Activated CD4-positive, alpha-beta memory T cell treated with anti-CD3 and anti-CD28 coated beads for 36 hours (primary cell): ENCODE measurements at regions of chr5 and their contacts with region 1.

Region 1: GRCh38 chr5:131382407-131383395 is 118.8 kb downstream of the CDC42SE2 start:
- DNase-seq: peak; percentile 58
- H3K4me3 Mint-ChIP-seq: peak overlapping the region; percentile 39
- H3K27ac Mint-ChIP-seq: peak overlapping the region; percentile 94
- H3K4me1 Mint-ChIP-seq: peaks cover 91% of the 10 kb centered on the region
- H3K27me3 Mint-ChIP-seq: no peaks in the 10 kb centered on the region

Region 2: DNA sequence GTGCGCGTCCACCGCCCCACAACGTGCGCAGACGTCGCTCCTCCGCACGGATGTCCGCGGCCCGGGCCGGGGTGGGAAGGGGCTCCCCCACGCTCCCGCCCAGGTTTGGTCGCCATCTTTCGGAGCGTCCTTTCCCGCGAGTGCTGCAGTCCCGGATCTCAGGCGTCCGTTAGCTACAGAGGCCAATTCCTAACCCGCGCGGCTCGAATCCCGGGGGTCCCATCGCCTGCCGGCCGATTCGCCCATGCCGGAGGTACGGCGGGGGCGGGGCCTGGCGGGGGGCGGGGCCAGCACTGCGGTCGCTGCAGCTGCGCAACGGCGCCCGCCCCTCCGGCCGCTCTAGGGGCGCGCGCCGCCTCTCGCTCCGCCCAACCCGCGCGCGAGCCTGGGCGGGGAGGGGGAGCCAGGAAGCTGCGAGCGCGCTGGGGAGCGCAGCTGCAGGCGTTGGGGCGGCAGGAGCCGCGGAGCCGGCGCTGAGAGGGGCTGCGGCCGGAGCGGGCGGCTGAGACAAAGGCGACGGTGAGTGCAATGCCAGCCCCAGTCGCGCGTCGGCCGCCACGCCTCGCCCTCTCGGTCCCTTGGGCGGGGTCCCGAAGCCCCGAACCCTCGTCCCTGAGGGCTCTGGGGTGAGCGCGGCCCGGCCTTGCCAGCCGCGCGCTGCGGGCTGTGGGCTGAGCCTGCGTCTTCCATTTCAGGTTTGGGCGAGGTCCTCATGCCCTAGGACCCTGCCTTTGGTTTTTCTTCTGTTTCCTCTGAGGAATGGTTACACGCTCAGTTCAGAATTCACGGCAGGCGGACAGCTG is 118.9 kb before region 1 on chr5 and contains the start of gene CDC42SE2:
- CTCF ChIA-PET with region 1: interaction called, 43 read pairs
- POLR2A ChIA-PET with region 1: interaction called, 65 read pairs
- intact Hi-C with region 1: loop called (anchors 1 kb)
- DNase-seq: peak; percentile 88
- H3K4me3 Mint-ChIP-seq: peak within 1 kb of the TSS; percentile 89
- H3K27ac Mint-ChIP-seq: peak within 1 kb of the TSS; percentile 95
- H3K4me1 Mint-ChIP-seq: peaks cover 48% of the 10 kb centered on the region
- H3K27me3 Mint-ChIP-seq: no peaks in the 10 kb centered on the region
- total RNA-seq, gene CDC42SE2: 103 to 104 TPM

Region 3: DNA sequence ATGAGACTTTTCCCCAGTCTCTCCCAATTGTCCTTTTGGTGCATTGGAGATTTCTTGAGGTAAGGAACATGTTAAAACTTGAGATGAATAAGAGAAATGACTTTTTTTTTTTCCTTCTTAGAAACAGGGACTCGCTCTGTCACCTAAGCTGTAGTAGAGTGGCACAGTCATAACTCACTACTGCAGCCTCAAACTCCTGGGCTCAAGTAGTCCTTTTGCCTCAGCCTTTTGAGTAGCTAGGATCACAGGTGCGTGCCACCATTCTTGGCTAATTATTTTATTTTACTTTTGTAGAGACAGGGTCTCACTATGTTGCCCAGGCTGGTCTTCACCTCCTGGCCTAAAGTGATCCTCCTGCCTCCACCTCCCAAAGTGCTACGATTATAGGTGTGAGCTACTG is 93.0 kb before region 1 on chr5:
- CTCF ChIA-PET with region 1: interaction called, 10 read pairs
- POLR2A ChIA-PET with region 1: interaction called, 4 read pairs
- intact Hi-C with region 1: loop called (anchors 1 kb)
- DNase-seq: peak; percentile 62
- H3K4me3 Mint-ChIP-seq: peak overlapping the region; percentile 75
- H3K27ac Mint-ChIP-seq: peak overlapping the region; percentile 97
- H3K4me1 Mint-ChIP-seq: peaks cover 69% of the 10 kb centered on the region
- H3K27me3 Mint-ChIP-seq: no peaks in the 10 kb centered on the region

Region 4: DNA sequence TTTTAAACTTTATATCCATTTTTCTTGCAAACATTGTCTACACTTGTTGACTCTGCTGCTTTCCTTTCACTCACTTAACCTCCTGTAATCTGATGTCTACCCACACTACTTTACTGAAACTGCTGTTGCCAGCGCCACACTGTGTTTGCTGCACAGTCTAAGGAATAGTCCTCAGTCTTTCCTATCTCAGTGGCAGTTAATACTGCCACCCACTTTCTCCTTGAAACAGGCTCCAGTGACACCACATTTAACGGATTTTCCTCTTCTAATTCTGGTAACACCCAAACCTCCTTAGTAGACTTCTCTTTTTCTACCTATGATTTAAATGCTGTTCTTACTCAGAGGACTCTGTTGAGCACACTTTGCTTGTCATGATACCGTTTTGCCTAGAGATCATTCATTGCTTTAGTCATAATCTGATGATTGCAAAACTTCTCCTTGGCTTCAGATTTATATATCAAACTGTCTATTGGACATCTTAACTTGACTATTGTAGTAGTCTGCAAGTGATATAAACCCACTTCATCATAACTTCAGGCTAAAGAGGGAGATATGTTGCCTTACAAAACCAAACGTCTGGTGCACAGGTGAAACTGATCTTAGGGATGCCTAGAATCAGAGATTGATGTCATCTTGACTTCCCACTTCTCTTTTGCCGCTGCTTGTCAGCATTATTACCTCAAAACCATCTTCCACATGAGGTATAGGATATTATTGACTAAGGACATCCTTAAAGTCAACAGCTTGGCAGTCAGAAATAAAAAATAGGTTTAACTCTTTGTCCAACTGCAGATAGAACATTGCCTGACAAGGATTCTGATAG is 24.8 kb before region 1 on chr5:
- CTCF ChIA-PET with region 1: interaction called, 8 read pairs
- POLR2A ChIA-PET with region 1: interaction called, 8 read pairs
- intact Hi-C with region 1: loop called (anchors 1 kb)
- DNase-seq: peak; percentile 72
- H3K4me3 Mint-ChIP-seq: peak overlapping the region; percentile 66
- H3K27ac Mint-ChIP-seq: peak overlapping the region; percentile 97
- H3K4me1 Mint-ChIP-seq: peaks cover 64% of the 10 kb centered on the region
- H3K27me3 Mint-ChIP-seq: no peaks in the 10 kb centered on the region

Region 5: DNA sequence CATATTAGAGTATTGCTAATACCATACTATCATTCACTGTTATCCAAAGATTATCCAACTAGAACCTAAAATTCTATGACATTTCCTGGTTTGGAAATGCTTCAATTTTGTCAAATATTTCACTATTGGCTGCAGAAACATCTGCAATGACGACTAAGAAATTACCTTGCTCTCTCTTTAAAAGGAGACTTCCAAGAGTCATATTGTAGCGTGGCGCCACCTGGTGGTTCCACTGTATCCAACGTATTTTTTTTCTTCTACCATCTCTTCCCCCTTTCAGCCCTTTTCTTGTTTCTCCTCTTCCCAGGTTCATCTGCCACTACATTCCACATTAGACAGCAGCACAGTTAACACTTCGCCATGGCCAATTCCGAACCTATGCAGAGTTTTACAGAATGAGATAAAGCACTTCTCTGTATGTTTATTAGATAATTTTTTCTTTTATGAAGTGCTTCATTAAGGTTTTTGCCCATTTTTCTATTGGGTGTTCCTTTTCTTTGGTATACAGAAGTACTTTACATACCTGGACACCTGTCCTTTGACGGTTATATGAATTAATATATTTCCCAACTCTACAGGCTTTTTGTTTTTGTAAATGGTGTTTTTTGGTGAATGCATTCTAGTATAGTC is 34.7 kb after region 1 on chr5:
- CTCF ChIA-PET with region 1: interaction called, 13 read pairs
- POLR2A ChIA-PET with region 1: interaction called, 4 read pairs
- intact Hi-C with region 1: loop called (anchors 5 kb)
- DNase-seq: peak; percentile 88
- H3K4me3 Mint-ChIP-seq: peak overlapping the region; percentile 49
- H3K27ac Mint-ChIP-seq: peak overlapping the region; percentile 80
- H3K4me1 Mint-ChIP-seq: peaks cover 41% of the 10 kb centered on the region
- H3K27me3 Mint-ChIP-seq: no peaks in the 10 kb centered on the region